ENCODE measurements at regions of chr15 and their contacts with region 1.

Region 1: DNA sequence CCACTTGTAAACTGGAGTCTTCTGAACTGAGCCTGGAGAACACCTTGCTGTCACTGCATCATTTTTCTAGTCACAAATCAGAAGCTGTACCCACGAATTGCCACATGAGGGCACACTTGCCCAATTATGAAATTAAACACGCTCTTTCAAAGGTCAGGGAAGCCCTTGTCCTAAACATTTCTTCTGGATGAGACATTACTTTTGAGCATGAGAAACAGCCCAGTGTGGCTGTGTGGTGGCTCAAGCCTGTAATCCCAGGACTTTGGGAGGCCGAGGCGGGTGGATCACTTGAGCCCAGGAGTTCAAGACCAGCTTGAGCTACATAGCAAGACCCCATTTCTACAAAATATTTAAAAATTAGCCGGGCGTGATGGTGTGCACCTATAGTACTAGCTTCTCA is 27.5 kb upstream of the CFAP161 start:
- DNase-seq: peak; percentile 39
- ATAC-seq: peak; percentile 66
- H3K4me3 ChIP-seq: no peak overlapping the region
- H3K27ac ChIP-seq: no peak overlapping the region
- H3K4me1 ChIP-seq: no peaks in the 10 kb centered on the region
- H3K27me3 ChIP-seq: no peaks in the 10 kb centered on the region; a peak in 2 of 5 replicates
- CTCF ChIP-seq: peak; percentile 79
- EP300 ChIP-seq: no peak
- POLR2A ChIP-seq: no peak
- RAD21 ChIP-seq: no peak

Region 2: GRCh38 chr15:80977627-80978036 is 128.9 kb before region 1 on chr15:
- CTCF ChIA-PET with region 1: no interaction called
- POLR2A ChIA-PET with region 1: no interaction called
- in situ Hi-C with region 1: no loop called
- intact Hi-C with region 1: loop called (anchors 5 kb)
- DNase-seq: peak; percentile 35
- ATAC-seq: peak; percentile 90
- H3K4me3 ChIP-seq: no peak overlapping the region
- H3K27ac ChIP-seq: no peak overlapping the region
- H3K4me1 ChIP-seq: no peaks in the 10 kb centered on the region
- H3K27me3 ChIP-seq: no peaks in the 10 kb centered on the region
- CTCF ChIP-seq: peak; percentile 65
- EP300 ChIP-seq: no peak
- POLR2A ChIP-seq: no peak
- RAD21 ChIP-seq: 0 out of 2 replicates have a peak, but pooled peaks have one; percentile 38

Region 3: DNA sequence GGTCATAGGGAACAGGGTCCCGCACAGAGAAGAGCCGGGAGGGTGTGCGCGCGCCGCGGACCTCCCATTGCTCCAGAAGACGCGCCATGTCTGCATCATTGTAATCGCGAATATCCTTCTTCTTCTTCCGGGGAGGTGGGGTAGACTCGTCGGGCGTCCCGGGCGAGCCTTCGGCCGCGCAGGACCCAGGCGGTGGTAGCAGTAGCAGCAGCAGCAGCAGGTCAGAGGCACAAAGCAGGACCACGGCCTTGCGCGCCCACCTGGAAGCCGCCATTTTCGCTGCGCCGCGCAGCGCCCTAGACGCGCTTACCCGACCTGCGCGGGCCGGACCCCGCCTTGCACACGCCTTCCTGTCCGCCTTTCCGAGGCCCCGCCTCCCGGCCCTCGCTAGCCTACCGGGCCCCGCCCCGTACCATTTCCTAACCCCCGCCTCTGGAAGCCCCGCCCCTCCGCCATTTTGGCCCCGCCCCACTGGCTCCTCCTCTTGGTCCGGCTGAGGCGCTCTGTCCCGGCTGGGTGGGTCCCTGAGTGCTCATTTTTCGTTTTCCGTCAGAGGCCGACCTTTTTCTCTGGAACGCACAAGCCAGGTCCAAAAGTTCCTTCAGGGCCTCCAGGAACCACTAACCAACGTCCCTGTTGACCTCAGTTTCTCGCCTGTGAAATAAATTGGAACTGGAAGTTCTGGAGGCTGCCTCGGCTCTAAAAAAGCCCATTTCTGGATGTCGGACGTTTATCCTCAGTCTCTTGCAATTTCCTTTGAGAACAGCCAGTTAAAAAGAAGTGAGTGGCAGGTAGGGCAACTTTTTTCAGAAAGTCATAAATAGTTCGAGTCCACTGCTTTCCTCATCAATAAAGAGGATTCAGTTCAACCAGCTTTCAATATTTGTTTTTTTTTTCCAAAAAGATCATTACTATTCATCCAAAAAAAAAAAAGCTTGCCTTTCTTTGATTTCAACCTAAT is 116.8 kb before region 1 on chr15 and contains the start of gene MESD:
- CTCF ChIA-PET with region 1: no interaction called
- POLR2A ChIA-PET with region 1: no interaction called
- in situ Hi-C with region 1: no loop called
- intact Hi-C with region 1: no loop called
- DNase-seq: peak; percentile 88
- ATAC-seq: peak; percentile 98
- H3K4me3 ChIP-seq: peak within 1 kb of the TSS; percentile 86 to 99 (median 95)
- H3K27ac ChIP-seq: peak within 1 kb of the TSS; percentile 80
- H3K4me1 ChIP-seq: peaks cover 41% of the 10 kb centered on the region
- H3K27me3 ChIP-seq: no peaks in the 10 kb centered on the region; a peak in 1 of 5 replicates
- CTCF ChIP-seq: no peak
- EP300 ChIP-seq: no peak; a peak in 1 of 4 replicates
- POLR2A ChIP-seq: peak; percentile 96 to 99
- RAD21 ChIP-seq: peak; percentile 19; the same call in 1 of the 2 replicates
- total RNA-seq, gene MESD: 24.9 and 46.2 TPM in 2 replicates

Region 4: DNA sequence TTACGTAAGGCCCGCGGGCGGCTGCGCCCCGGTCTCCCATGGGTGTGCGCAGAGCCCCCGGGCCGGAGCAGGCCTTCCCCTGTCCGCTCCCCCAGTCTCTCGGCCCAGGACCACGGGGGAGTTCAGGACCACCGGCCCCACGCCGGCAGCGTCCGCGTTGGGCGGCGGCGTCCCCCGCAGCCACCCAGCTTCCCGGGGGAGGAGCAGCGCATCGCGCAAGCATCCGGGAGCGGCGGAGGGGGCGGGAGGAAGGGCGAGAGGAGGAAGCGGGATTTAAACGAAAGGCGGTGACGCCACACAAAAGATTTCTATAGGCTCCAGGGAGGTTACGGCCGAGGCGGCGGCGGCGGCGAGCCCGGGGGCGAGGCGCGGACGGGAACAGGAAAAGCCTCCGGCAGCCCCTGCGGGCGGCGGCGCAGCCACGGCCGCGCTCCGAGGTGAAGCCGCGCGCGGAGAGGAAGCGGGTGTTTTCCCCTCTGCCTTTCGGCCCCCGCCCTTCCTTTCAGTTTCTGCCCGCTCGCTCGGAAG is 105.9 kb before region 1 on chr15 and contains the start of gene TLNRD1:
- CTCF ChIA-PET with region 1: no interaction called
- POLR2A ChIA-PET with region 1: no interaction called
- in situ Hi-C with region 1: no loop called
- intact Hi-C with region 1: loop called (anchors 5 kb)
- DNase-seq: peak; percentile 83
- ATAC-seq: peak; percentile 88
- H3K4me3 ChIP-seq: peak within 1 kb of the TSS; percentile 76 to 92 (median 88)
- H3K27ac ChIP-seq: peak within 1 kb of the TSS; percentile 84
- H3K4me1 ChIP-seq: peaks cover 40% of the 10 kb centered on the region
- H3K27me3 ChIP-seq: no peaks in the 10 kb centered on the region
- CTCF ChIP-seq: no peak
- EP300 ChIP-seq: no peak
- POLR2A ChIP-seq: peak; percentile 59 to 90; a peak in 3 of 4 replicates
- RAD21 ChIP-seq: no peak
- total RNA-seq, gene TLNRD1: 4.6 and 5.3 TPM in 2 replicates

Region 5: DNA sequence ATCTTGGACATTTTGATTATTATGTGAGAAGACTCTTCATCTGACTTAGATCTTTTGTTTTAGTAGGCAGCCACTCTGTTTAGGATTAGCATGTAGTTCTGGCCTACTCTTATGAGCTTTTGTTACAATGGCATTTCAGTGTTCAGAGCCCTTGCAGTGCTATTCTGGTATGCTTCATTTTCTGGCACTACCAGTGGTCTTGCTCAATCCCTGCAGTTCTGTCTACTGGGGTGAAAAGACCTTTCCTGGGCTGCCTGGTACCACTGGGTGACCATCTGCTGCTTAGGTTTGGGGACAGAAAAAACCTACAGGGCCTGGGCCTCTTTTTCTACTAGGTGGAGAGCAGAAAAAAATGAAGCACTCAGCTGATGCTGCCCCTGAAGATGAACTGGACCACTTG is 132.6 kb after region 1 on chr15:
- CTCF ChIA-PET with region 1: no interaction called
- POLR2A ChIA-PET with region 1: no interaction called
- in situ Hi-C with region 1: no loop called
- intact Hi-C with region 1: no loop called
- DNase-seq: no peak
- ATAC-seq: no peak
- H3K4me3 ChIP-seq: no peak overlapping the region
- H3K27ac ChIP-seq: no peak overlapping the region
- H3K4me1 ChIP-seq: no peaks in the 10 kb centered on the region
- H3K27me3 ChIP-seq: no peaks in the 10 kb centered on the region
- CTCF ChIP-seq: no peak
- EP300 ChIP-seq: no peak
- POLR2A ChIP-seq: no peak
- RAD21 ChIP-seq: no peak

Region 6: GRCh38 chr15:81265944-81266775 is 159.6 kb after region 1 on chr15:
- CTCF ChIA-PET with region 1: interaction called, 47 read pairs
- POLR2A ChIA-PET with region 1: no interaction called
- in situ Hi-C with region 1: loop called (anchors 5 kb)
- intact Hi-C with region 1: loop called (anchors 1 kb)
- DNase-seq: peak; percentile 59
- ATAC-seq: peak; percentile 98
- H3K4me3 ChIP-seq: no peak overlapping the region
- H3K27ac ChIP-seq: no peak overlapping the region
- H3K4me1 ChIP-seq: peaks cover 10% of the 10 kb centered on the region
- H3K27me3 ChIP-seq: peaks cover 0 to 12% of the 10 kb centered on the region in 2 experiments; a peak in 3 of 5 replicates
- CTCF ChIP-seq: peak; percentile 88
- EP300 ChIP-seq: no peak
- POLR2A ChIP-seq: no peak
- RAD21 ChIP-seq: peak; percentile 79

Region 7: GRCh38 chr15:82966671-82967071 is 1860.1 kb after region 1 on chr15:
- CTCF ChIA-PET with region 1: no interaction called
- POLR2A ChIA-PET with region 1: no interaction called
- in situ Hi-C with region 1: no loop called
- intact Hi-C with region 1: no loop called
- DNase-seq: no peak
- ATAC-seq: no peak
- H3K4me3 ChIP-seq: no peak overlapping the region
- H3K27ac ChIP-seq: no peak overlapping the region
- H3K4me1 ChIP-seq: peaks cover 10% of the 10 kb centered on the region
- H3K27me3 ChIP-seq: no peaks in the 10 kb centered on the region
- CTCF ChIP-seq: no peak
- EP300 ChIP-seq: no peak
- POLR2A ChIP-seq: no peak
- RAD21 ChIP-seq: no peak